Posterior vena cava (tissue), 2 donors: ENCODE measurements at regions of chr5 and their contacts with region 1.

Region 1: GRCh38 chr5:137815202-137815985 is 52.3 kb upstream of the MYOT start:
- DNase-seq: no peak

Region 2: DNA sequence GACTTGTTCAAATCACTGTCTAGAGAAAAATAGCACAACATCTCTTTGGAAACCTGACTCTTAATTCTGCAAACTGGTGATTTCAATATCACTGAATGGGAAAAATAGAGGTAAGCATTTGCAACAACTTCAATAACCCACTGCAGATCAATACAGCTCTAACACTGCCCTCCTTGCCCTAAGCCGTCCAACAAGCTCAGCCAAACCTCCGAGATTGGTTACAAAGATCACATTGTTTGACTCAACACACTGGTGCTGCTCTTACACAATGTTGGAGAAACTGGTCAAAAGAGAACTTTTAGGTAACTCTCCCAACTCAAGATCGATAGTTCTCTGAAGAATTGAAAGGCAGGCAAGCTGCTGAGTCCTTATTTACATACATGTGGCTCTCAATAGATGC is 466.6 kb before region 1 on chr5:
- intact Hi-C with region 1: no loop called
- DNase-seq: no peak

Region 3: GRCh38 chr5:137641148-137641547 is 174.2 kb before region 1 on chr5:
- intact Hi-C with region 1: no loop called
- DNase-seq: no peak

Region 4: GRCh38 chr5:137778772-137779564 is 36.4 kb before region 1 on chr5:
- intact Hi-C with region 1: loop called in 1 of 2 experiments (anchors 2 kb)
- DNase-seq: no peak

Region 5: GRCh38 chr5:137800700-137801411 is 14.5 kb before region 1 on chr5:
- intact Hi-C with region 1: no loop called
- DNase-seq: no peak

Region 6: GRCh38 chr5:137833463-137833862 is 18.1 kb after region 1 on chr5:
- intact Hi-C with region 1: no loop called
- DNase-seq: no peak

Region 7: GRCh38 chr5:138148811-138149210 is 333.4 kb after region 1 on chr5:
- intact Hi-C with region 1: loop called in 1 of 2 experiments (anchors 5 kb)
- DNase-seq: no peak